ENCODE measurements at regions of chr2 and their contacts with region 1.

Region 1: DNA sequence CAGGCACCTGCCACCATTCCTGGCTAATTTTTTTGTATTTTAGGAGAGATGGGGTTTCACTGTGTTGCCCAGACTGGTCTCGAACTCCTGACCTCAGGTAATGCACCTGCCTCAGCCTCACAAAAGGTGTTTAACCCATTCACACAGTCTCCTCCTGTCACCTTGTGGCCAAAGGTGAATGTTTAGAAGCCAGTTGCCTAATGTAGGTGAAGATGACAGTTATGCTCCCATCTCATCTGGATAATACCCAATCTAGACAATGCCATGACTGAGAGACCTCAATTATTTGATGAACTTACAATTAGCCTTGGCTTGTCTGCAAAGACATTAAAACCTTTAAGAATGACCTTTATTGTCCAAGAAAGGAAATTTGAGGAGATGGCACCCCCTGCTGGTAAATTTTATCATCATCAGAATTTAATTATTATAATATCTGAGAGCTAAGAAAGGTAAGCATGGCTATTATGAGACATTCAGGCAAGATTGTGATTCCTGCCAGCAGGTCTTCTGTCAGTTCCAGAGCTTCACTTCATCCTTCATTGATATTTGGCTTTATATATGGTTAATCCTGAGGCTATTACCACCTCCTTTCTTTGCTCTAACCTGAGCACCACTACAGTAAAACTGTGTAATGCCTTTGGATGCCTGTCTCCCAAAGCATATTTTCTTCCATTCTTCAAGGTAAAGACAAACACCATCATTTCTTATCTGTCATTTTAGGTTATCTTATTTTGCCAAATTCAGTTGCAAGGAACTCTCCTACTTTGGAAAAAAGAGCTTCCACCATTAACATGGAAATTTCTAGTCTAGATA is 117.6 kb downstream of the FAM124B start:
- DNase-seq: no peak
- H3K4me3 ChIP-seq: no peak overlapping the region
- H3K27ac ChIP-seq: no peak overlapping the region
- H3K4me1 ChIP-seq: no peaks in the 10 kb centered on the region
- H3K27me3 ChIP-seq: no peaks in the 10 kb centered on the region
- CTCF ChIP-seq: peak; percentile 58 to 84 (median 66)
- POLR2A ChIP-seq: no peak

Region 2: GRCh38 chr2:222483513-222484039 is 1800.8 kb before region 1 on chr2:
- intact Hi-C with region 1: no loop called
- DNase-seq: no peak
- H3K4me3 ChIP-seq: no peak overlapping the region
- H3K27ac ChIP-seq: no peak overlapping the region
- H3K4me1 ChIP-seq: no peaks in the 10 kb centered on the region
- H3K27me3 ChIP-seq: no peaks in the 10 kb centered on the region
- CTCF ChIP-seq: no peak
- POLR2A ChIP-seq: no peak

Region 3: DNA sequence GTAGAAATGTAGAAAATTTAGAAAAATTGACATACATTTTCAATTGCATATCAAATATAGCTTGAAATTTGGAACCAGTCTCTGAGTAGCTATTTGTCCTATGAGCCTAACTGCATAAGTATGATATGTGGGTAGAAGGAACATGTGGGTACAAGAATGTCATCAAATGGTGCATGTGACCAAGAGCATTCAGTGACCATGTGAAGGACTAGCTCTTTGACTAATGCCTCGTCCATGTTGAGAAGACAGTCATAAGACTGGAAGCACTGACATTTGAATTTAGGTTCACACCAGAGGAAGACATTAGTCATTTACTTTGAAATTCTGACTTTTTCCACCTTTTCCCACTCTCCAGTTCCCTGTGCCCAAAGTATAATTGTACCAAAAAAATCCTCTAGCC is 314.5 kb before region 1 on chr2:
- intact Hi-C with region 1: loop called (anchors 5 kb)
- DNase-seq: no peak
- H3K4me3 ChIP-seq: no peak overlapping the region
- H3K27ac ChIP-seq: no peak overlapping the region
- H3K4me1 ChIP-seq: no peaks in the 10 kb centered on the region
- H3K27me3 ChIP-seq: no peaks in the 10 kb centered on the region
- CTCF ChIP-seq: no peak
- POLR2A ChIP-seq: no peak

Region 4: GRCh38 chr2:223993621-223994232 is 290.6 kb before region 1 on chr2:
- intact Hi-C with region 1: loop called (anchors 2 kb)
- DNase-seq: no peak
- H3K4me3 ChIP-seq: no peak overlapping the region
- H3K27ac ChIP-seq: no peak overlapping the region
- H3K4me1 ChIP-seq: no peaks in the 10 kb centered on the region
- H3K27me3 ChIP-seq: no peaks in the 10 kb centered on the region
- CTCF ChIP-seq: peak; percentile 62 to 78 (median 73)
- POLR2A ChIP-seq: no peak

Measured in vagina (tissue), 2 donors.